B cell (primary cell): ENCODE measurements at regions of chr2 and their contacts with region 1.

Region 1: GRCh38 chr2:25402477-25402876 is 60.8 kb upstream of the DNMT3A start:
- DNase-seq: peak; percentile 50
- ATAC-seq: peak; percentile 23
- H3K4me3 ChIP-seq: no peak overlapping the region
- H3K4me3 Mint-ChIP-seq: peak overlapping the region; percentile 46
- H3K27ac ChIP-seq: peak overlapping the region; percentile 69 to 77
- H3K27ac Mint-ChIP-seq: peak overlapping the region; percentile 79
- H3K4me1 ChIP-seq: peaks cover 72 to 87% of the 10 kb centered on the region in 2 donors
- H3K4me1 Mint-ChIP-seq: peaks cover 81% of the 10 kb centered on the region
- H3K27me3 ChIP-seq: no peaks in the 10 kb centered on the region
- H3K27me3 Mint-ChIP-seq: no peaks in the 10 kb centered on the region
- CTCF ChIP-seq: no peak

Region 2: GRCh38 chr2:25420820-25421237 is 18.4 kb after region 1 on chr2:
- CTCF ChIA-PET with region 1: interaction called, 4 read pairs
- POLR2A ChIA-PET with region 1: interaction called, 11 read pairs
- intact Hi-C with region 1: loop called (anchors 2 kb)
- DNase-seq: peak; percentile 60
- ATAC-seq: peak; percentile 42
- H3K4me3 ChIP-seq: peak overlapping the region in 4 of 5 experiments; percentile 19 to 57 (median 34)
- H3K4me3 Mint-ChIP-seq: peak overlapping the region; percentile 84
- H3K27ac ChIP-seq: peak overlapping the region; percentile 89 to 94
- H3K27ac Mint-ChIP-seq: peak overlapping the region; percentile 96
- H3K4me1 ChIP-seq: peaks cover 79 to 86% of the 10 kb centered on the region in 2 donors
- H3K4me1 Mint-ChIP-seq: peaks cover 85% of the 10 kb centered on the region
- H3K27me3 ChIP-seq: no peaks in the 10 kb centered on the region
- H3K27me3 Mint-ChIP-seq: no peaks in the 10 kb centered on the region
- CTCF ChIP-seq: no peak

Region 3: GRCh38 chr2:25431604-25432003 is 29.1 kb after region 1 on chr2:
- CTCF ChIA-PET with region 1: no interaction called
- POLR2A ChIA-PET with region 1: no interaction called
- intact Hi-C with region 1: no loop called
- DNase-seq: no peak
- ATAC-seq: no peak
- H3K4me3 ChIP-seq: no peak overlapping the region
- H3K4me3 Mint-ChIP-seq: no peak overlapping the region
- H3K27ac ChIP-seq: no peak overlapping the region
- H3K27ac Mint-ChIP-seq: peak overlapping the region; percentile 34
- H3K4me1 ChIP-seq: no peaks in the 10 kb centered on the region
- H3K4me1 Mint-ChIP-seq: peaks cover 15% of the 10 kb centered on the region
- H3K27me3 ChIP-seq: no peaks in the 10 kb centered on the region
- H3K27me3 Mint-ChIP-seq: no peaks in the 10 kb centered on the region
- CTCF ChIP-seq: no peak

Region 4: GRCh38 chr2:25453199-25453905 is 50.9 kb after region 1 on chr2:
- CTCF ChIA-PET with region 1: no interaction called
- POLR2A ChIA-PET with region 1: no interaction called
- intact Hi-C with region 1: loop called (anchors 5 kb)
- DNase-seq: peak; percentile 24
- ATAC-seq: peak; percentile 45
- H3K4me3 ChIP-seq: no peak overlapping the region
- H3K4me3 Mint-ChIP-seq: peak overlapping the region; percentile 40
- H3K27ac ChIP-seq: peak overlapping the region; percentile 38 to 72
- H3K27ac Mint-ChIP-seq: peak overlapping the region; percentile 83
- H3K4me1 ChIP-seq: peaks cover 7 to 10% of the 10 kb centered on the region in 2 donors
- H3K4me1 Mint-ChIP-seq: peaks cover 34% of the 10 kb centered on the region
- H3K27me3 ChIP-seq: no peaks in the 10 kb centered on the region
- H3K27me3 Mint-ChIP-seq: no peaks in the 10 kb centered on the region
- CTCF ChIP-seq: no peak

Region 5: GRCh38 chr2:26685989-26686839 is 1283.7 kb after region 1 on chr2:
- CTCF ChIA-PET with region 1: no interaction called
- POLR2A ChIA-PET with region 1: no interaction called
- intact Hi-C with region 1: no loop called
- DNase-seq: no peak
- ATAC-seq: no peak
- H3K4me3 ChIP-seq: no peak overlapping the region
- H3K4me3 Mint-ChIP-seq: no peak overlapping the region
- H3K27ac ChIP-seq: no peak overlapping the region
- H3K27ac Mint-ChIP-seq: no peak overlapping the region
- H3K4me1 ChIP-seq: no peaks in the 10 kb centered on the region
- H3K4me1 Mint-ChIP-seq: no peaks in the 10 kb centered on the region
- H3K27me3 ChIP-seq: peaks cover 0 to 29% (median 7%) of the 10 kb centered on the region in 4 experiments
- H3K27me3 Mint-ChIP-seq: peaks cover 60% of the 10 kb centered on the region
- CTCF ChIP-seq: no peak